ENCODE measurements at regions of chr1 and their contacts with region 1.

Region 1: GRCh38 chr1:204363335-204364124 is 3.8 kb upstream of the PLEKHA6 start:
- DNase-seq: peak; percentile 83
- H3K4me3 ChIP-seq: peak overlapping the region; percentile 38
- H3K27ac ChIP-seq: no peak overlapping the region
- H3K4me1 ChIP-seq: peaks cover 7% of the 10 kb centered on the region
- H3K27me3 ChIP-seq: no peaks in the 10 kb centered on the region
- CTCF ChIP-seq: peak; percentile 98

Region 2: DNA sequence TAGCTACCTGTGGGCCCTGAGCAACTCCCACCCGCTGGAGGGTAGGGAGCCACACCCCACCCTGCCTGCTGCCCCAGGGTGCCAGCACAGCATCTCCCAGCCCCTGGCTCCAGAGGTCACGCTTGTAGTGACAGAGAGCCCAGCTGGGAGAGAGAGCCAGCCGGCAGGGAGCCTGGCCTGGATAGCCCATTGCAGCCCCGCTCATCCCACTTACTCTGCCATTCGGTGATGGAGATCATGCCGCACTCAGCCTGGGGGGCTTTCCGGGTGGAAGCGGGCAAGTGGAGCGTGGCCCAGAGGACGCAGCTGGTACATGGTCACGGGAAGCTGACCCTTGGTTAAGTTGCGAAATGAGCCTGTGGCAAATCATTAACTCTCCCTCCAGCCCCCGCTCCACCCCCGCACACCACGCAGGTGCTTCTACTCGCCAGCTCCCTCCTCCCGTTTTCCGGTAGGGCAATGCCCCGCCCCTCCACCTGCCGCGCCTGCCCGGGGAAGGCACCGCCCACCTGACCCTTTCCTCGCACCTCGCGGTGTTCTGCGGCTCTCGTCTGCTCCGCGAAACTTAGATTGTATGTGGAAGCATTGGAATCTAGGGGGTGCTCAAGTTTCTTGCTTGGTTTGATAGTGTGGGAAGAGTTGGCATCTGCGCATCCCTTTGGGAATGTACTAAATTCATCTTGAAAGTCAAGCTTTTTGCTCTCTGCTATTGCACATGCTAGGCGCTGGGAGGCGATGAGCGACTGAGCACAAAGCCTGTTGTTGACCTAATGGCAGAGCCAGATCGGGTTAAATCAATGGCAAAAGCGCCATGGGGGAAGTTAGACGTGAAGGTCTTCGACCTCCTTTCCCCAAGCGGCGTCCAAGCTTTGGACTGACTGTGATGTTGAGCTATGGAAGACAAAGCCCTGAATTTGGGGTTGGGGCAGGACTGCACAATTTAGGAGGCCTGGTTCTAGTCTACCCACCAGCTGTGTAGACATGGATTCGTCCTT is 149.6 kb before region 1 on chr1 and contains the start of gene GOLT1A:
- CTCF ChIA-PET with region 1: interaction called, 13 read pairs
- POLR2A ChIA-PET with region 1: no interaction called
- intact Hi-C with region 1: loop called (anchors 1 kb)
- DNase-seq: peak; percentile 87
- H3K4me3 ChIP-seq: peak within 1 kb of the TSS; percentile 21
- H3K27ac ChIP-seq: no peak within 1 kb of the TSS
- H3K4me1 ChIP-seq: peaks cover 7% of the 10 kb centered on the region
- H3K27me3 ChIP-seq: no peaks in the 10 kb centered on the region
- CTCF ChIP-seq: peak; percentile 87
- total RNA-seq, gene GOLT1A: not detected in 2 replicates

Region 3: DNA sequence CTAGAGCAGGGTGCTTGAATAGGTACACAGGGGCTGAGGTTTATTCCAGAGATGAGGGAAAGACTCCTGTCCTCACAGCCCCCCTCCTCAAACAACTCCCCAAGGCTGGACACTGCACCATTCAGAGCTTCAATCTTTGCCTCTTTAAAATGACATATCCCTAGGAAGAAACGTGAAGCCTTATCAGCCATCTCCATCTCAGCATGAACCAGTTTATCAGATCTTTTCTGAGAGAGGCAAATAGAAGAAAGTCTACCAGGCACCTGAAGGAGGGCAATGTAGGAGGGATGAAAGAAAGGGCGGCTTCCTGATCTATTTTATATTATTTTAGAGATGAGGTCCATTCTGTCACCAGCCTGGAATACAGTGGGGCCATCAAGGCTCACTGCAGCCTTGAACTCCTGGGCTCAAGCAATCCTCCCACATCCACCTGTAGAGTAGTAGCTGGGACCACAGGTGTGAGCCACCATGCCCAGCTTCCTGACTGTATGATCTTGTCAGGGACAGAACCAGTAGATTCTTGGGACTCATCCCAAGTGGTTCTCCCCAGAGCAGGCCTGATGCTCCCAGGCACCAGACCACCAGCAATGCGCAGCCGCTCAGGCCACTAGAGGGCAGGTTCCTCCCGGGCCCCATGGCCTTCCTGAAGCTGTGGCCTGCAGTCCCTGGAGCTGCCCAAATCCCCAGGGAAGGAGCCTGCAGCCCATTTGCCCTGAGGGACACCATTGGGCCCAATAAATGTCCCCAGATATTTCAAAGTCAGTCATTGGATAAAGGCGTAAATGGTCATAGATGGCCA is 105.4 kb before region 1 on chr1:
- CTCF ChIA-PET with region 1: interaction called, 15 read pairs
- POLR2A ChIA-PET with region 1: no interaction called
- intact Hi-C with region 1: loop called (anchors 5 kb)
- DNase-seq: peak; percentile 63
- H3K4me3 ChIP-seq: no peak overlapping the region
- H3K27ac ChIP-seq: no peak overlapping the region
- H3K4me1 ChIP-seq: peaks cover 22% of the 10 kb centered on the region
- H3K27me3 ChIP-seq: no peaks in the 10 kb centered on the region
- CTCF ChIP-seq: peak; percentile 76

Region 4: GRCh38 chr1:204516180-204516879 is 152.8 kb after region 1 on chr1 and contains the start of gene MDM4:
- CTCF ChIA-PET with region 1: no interaction called
- POLR2A ChIA-PET with region 1: no interaction called
- intact Hi-C with region 1: no loop called
- DNase-seq: peak; percentile 99
- H3K4me3 ChIP-seq: peak within 1 kb of the TSS; percentile 60
- H3K27ac ChIP-seq: peak within 1 kb of the TSS; percentile 91
- H3K4me1 ChIP-seq: peaks cover 6% of the 10 kb centered on the region
- H3K27me3 ChIP-seq: no peaks in the 10 kb centered on the region
- CTCF ChIP-seq: no peak
- total RNA-seq, gene MDM4: 71.3 and 86.1 TPM in 2 replicates